WTC11 (cell line): ENCODE measurements at regions of chr18 and their contacts with region 1.

Region 1: DNA sequence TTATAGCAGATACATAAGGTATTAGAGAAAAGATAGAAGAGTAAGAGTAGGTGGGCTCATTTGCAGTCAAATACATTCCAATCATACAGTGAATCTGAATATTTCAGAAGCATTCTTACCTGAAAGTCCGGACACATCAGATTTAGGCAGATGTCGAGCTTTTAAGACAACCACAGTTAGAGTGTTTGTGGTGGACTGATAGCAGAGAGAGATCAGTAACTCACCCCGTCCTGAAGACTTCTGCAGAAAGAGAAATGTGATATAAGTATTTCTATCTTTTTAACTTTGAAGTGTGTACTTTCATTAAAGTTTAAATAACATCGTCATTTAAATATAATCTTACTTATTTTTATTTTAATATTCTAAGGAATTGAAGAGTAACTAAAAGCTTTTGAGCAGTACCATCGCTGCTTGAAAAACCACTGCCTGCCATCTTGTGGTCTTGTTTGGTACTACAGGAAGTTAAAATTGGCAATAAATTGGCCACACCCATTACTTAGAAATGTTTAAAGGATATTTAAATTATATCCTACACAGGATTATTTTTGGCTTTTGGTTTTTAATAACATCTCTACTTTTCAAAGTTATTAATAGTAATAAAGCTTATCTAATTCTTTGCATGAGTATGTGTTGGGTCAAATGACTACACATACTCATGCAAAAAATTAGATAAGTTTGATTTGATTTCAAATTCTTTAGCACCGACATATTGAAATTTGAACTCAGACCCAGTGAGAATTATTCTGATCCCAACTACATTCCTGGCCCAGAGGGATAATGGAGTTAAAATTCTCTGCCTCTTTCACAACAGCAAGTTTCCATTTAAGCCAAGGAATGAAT is 5.5 kb downstream of the SYT4 start:
- DNase-seq: peak; percentile 18
- ATAC-seq: peak; percentile 41
- H3K4me3 Mint-ChIP-seq: no peak overlapping the region
- H3K27ac Mint-ChIP-seq: no peak overlapping the region
- H3K4me1 Mint-ChIP-seq: peaks cover 40% of the 10 kb centered on the region
- H3K27me3 Mint-ChIP-seq: no peaks in the 10 kb centered on the region
- CTCF ChIP-seq: peak; percentile 65

Region 2: DNA sequence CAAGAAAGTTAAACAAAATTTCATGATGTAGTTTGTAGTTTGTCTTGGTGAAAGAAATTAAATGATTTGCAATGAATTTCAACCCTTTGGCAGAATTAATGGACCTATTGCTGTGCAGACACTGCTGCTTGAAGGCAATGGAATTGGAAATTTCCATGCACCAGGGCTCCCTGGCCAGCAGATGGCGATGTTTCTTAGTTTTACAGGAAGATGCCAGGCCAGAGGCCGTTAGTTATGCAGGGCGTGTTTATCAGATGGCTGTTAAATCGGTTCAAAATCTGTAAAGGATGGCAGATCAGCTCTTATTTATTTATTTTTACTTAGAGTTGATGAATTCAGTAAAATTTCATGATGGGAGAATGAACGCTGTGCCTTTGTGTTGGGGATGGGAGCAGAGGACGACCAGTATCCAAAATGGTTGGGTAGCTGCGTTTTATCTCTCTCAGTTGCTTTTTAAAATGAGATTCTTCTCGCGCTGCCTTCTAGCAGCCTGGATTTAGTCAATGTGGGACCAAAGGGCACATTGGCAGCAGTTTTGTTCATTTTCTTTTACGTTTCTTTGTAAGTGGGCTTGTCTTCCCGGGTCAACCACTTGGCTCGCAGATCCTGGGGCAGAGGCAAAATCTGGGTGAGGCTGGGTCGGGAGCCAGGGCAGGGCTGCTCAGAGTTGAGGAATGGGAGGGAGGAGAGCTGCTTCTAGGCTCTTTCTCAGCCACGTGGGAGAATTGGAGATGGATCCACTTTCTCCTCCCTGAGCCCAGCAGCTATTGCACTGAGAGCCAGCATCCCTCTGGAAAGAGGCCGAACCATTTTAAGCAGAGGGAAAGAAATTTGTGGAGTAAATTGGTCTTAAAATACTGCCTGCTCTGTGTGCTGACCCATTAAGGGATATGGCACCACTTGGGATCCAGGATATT is 972.8 kb before region 1 on chr18:
- CTCF ChIA-PET with region 1: interaction called, 11 read pairs
- POLR2A ChIA-PET with region 1: no interaction called
- DNase-seq: peak; percentile 80
- ATAC-seq: peak; percentile 88
- H3K4me3 Mint-ChIP-seq: no peak overlapping the region
- H3K27ac Mint-ChIP-seq: no peak overlapping the region
- H3K4me1 Mint-ChIP-seq: peaks cover 11% of the 10 kb centered on the region
- H3K27me3 Mint-ChIP-seq: no peaks in the 10 kb centered on the region
- CTCF ChIP-seq: peak; percentile 82

Region 3: DNA sequence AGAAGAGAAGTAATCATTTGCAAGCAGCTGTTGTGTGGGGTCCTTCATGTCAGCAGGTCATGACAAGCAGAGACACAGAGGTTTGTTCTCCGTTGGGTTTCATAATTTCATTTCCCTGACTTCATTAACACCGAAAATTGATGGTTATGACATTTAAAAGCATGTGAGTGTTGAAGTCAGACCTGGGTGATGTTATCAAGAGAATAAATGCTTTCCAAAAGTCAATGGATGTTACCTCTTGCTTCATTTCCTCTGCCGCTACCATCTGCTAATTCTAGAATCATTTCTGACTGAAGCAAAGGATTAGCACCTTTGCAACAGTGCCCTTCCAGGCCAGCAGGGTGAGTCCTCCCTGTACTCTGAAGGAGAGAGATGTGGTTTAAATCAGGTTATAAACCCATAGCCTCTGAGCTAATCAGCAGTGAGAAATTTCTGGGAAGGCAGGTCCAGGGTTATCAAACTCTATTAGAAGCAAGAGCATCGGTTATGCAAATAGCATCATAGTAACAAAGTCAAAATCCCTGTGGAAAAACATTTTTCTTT is 870.6 kb before region 1 on chr18:
- CTCF ChIA-PET with region 1: interaction called, 11 read pairs
- POLR2A ChIA-PET with region 1: no interaction called
- DNase-seq: peak; percentile 22
- ATAC-seq: peak; percentile 84
- H3K4me3 Mint-ChIP-seq: no peak overlapping the region
- H3K27ac Mint-ChIP-seq: no peak overlapping the region
- H3K4me1 Mint-ChIP-seq: no peaks in the 10 kb centered on the region
- H3K27me3 Mint-ChIP-seq: peaks cover 7% of the 10 kb centered on the region; the same call in 1 of the 2 replicates
- CTCF ChIP-seq: no peak